Tibial artery (tissue), 4 donors: ENCODE measurements at regions of chr5 and their contacts with region 1.

Region 1: DNA sequence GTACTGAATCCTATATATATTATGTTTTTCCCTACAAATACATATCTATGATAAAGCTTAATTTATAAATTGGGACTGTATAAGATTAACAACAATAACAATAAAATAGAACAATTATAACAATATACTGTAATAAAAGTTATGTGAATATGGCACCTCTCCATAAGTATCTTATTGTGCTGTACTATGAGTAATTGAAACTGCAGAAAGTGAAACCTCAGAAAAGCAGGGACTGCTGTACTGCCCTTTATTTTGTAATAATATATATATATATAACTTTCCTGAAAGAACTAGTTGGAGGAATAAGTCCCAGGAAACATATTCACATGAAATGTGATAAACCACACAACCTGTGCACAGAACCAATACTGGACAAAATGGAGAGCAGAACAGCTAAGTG is 77.3 kb downstream of the PAM start:
- DNase-seq: no peak
- H3K4me3 ChIP-seq: no peak overlapping the region
- H3K27ac ChIP-seq: no peak overlapping the region
- H3K4me1 ChIP-seq: peaks cover 0 to 41% (median 8%) of the 10 kb centered on the region in 4 donors
- H3K27me3 ChIP-seq: no peaks in the 10 kb centered on the region
- CTCF ChIP-seq: no peak

Region 2: GRCh38 chr5:102815540-102816332 is 16.7 kb before region 1 on chr5:
- intact Hi-C with region 1: loop called (anchors 2 kb)
- DNase-seq: no peak
- H3K4me3 ChIP-seq: no peak overlapping the region
- H3K27ac ChIP-seq: no peak overlapping the region
- H3K4me1 ChIP-seq: peaks cover 0 to 44% (median 4%) of the 10 kb centered on the region in 4 donors
- H3K27me3 ChIP-seq: no peaks in the 10 kb centered on the region
- CTCF ChIP-seq: no peak